ENCODE measurements at regions of chr7 and their contacts with region 1.

Region 1: DNA sequence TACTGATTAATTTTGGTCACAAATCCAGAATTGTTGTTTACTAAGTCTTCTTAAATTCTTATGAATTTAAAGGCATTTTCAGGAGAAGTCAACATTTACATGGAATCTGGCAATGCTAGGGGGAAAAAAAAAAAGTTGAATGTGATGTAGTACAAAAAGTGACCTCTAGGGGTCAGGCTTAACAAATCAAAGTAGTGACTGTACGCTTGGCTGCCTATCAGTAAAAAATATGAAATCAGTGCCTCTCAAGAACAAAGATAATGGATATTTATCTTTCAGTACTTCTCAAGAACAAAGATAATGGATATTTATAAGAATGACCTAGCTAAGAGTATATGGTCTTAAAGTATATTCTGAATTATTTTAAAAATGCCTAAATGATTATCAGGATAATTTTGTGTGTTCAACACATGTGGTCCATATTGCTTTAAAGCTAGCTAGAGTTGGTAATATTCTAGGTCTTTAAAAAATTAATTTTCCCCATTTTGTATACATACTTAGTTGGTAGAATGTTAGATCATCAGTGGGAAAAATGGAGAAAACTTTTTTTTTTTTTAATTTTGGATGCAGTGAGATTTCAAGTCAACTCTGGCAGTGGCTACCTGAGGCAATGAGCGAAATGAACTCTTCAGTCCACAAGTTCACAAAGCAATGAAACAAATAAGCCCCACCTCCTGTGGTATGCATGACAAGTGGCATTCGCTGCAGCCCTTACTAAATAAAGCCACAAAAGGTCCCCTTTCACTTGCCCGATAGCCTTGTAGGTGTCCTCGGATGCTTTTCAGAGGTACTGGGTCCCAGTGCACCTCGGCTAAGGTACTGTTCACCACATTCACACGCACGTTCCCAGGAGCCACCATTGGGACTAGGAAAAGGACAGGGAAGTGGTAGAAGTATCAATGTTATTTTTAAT is 51.2 kb upstream of the LAMB4 start:
- DNase-seq: no peak
- ATAC-seq: peak; percentile 49 to 59
- H3K4me3 ChIP-seq: no peak overlapping the region
- H3K27ac ChIP-seq: no peak overlapping the region
- H3K4me1 ChIP-seq: no peaks in the 10 kb centered on the region
- H3K27me3 ChIP-seq: no peaks in the 10 kb centered on the region
- CTCF ChIP-seq: peak; percentile 75

Region 2: GRCh38 chr7:108002726-108003598 is 178.4 kb before region 1 on chr7 and contains the start of gene LAMB1:
- intact Hi-C with region 1: no loop called
- DNase-seq: peak; percentile 60
- ATAC-seq: peak; percentile 72 to 78
- H3K4me3 ChIP-seq: peak within 1 kb of the TSS; percentile 69
- H3K27ac ChIP-seq: peak within 1 kb of the TSS; percentile 82
- H3K4me1 ChIP-seq: peaks cover 48% of the 10 kb centered on the region
- H3K27me3 ChIP-seq: peaks cover 34% of the 10 kb centered on the region
- CTCF ChIP-seq: no peak
- total RNA-seq, gene LAMB1: 104 TPM

Region 3: DNA sequence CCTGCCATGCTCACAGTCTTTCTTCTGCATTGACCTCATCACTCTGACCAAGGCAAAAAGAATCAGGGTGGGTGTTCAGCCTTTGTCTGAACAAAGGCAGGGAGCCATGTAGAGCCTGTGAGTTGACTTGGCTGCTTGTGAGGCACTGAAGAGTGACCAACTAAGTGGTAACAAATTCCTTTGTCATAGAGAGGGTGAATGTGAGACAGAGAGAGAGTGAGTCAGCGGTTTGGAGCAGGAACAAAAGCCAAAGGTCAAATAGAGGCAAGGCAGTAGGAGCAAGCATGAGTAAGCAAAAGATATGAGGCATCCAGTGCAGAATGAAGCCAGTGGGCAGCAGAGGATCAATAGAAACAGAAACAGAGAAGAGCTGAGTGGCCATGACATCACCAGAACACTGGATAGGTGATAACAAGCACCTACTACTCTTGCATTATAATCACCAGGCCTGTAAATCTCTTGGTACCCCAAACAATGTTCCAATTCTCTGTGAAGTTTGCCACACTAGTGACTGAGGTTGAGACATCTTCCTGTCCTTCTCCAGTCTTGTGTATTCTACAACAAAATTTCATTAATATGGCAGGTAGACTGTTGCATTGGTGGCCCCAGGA is 65.0 kb after region 1 on chr7:
- intact Hi-C with region 1: no loop called
- DNase-seq: no peak
- ATAC-seq: peak; percentile 47 to 48
- H3K4me3 ChIP-seq: no peak overlapping the region
- H3K27ac ChIP-seq: no peak overlapping the region
- H3K4me1 ChIP-seq: no peaks in the 10 kb centered on the region
- H3K27me3 ChIP-seq: no peaks in the 10 kb centered on the region
- CTCF ChIP-seq: no peak

Region 4: DNA sequence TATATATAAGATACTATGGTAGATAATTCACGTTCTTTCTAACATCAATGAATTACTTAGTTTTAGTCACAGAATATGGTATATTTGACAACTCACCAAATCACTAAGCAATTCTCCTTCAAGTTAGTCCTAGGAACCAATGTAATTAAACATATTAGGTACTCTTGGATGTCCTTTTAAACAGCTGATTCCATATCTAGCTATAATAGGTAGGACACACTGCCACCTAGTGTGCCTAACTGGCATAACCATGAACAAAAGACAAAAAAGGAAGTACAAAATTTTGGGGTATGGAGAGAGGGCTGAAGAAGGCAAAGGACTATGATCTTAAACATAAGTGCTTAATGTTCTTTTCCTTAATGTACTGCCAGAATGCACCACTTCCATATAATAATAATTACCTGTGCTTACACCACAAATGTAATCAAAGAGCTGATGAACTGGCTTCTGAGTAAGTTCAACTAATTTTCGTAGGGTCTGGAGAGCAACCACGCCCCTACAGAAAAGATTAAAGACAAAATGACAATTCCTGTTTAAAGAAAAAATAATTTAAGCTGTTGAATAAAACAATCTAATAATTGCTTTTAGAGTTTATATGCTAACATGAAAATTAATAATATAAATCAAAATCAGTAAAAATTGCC is 315.9 kb after region 1 on chr7:
- intact Hi-C with region 1: loop called (anchors 5 kb)
- DNase-seq: no peak
- ATAC-seq: peak; percentile 73 to 76
- H3K4me3 ChIP-seq: no peak overlapping the region
- H3K27ac ChIP-seq: no peak overlapping the region
- H3K4me1 ChIP-seq: no peaks in the 10 kb centered on the region
- H3K27me3 ChIP-seq: no peaks in the 10 kb centered on the region
- CTCF ChIP-seq: peak; percentile 83

Measured in lower lobe of right lung (tissue), 2 donors.